GM12878 (cell line): ENCODE measurements at regions of chr14 and their contacts with region 1.

Region 1: GRCh38 chr14:95534299-95535225 is at the start of gene GLRX5:
- DNase-seq: peak; percentile 100
- ATAC-seq: peak; percentile 92
- H3K4me3 ChIP-seq: peak within 1 kb of the TSS; percentile 93
- H3K27ac ChIP-seq: peak within 1 kb of the TSS; percentile 87
- H3K4me1 ChIP-seq: peaks cover 8% of the 10 kb centered on the region; the same call in 1 of the 2 replicates
- H3K27me3 ChIP-seq: no peaks in the 10 kb centered on the region
- CTCF ChIP-seq: no peak
- EP300 ChIP-seq: no peak
- POLR2A ChIP-seq: peak; percentile 76
- RAD21 ChIP-seq: no peak
- polyA plus RNA-seq, gene GLRX5: 13.7 to 28.8 TPM

Region 2: GRCh38 chr14:95157327-95158189 is 377.0 kb before region 1 on chr14 and contains the start of gene DICER1:
- CTCF ChIA-PET with region 1: no interaction called
- POLR2A ChIA-PET with region 1: no interaction called
- RAD21 ChIA-PET with region 1: no interaction called
- SMC1A ChIA-PET with region 1: no interaction called
- in situ Hi-C with region 1: no loop called
- intact Hi-C with region 1: loop called (anchors 10 kb)
- DNase-seq: peak; percentile 44
- ATAC-seq: peak; percentile 85
- H3K4me3 ChIP-seq: peak within 1 kb of the TSS; percentile 89
- H3K27ac ChIP-seq: peak within 1 kb of the TSS; percentile 95
- H3K4me1 ChIP-seq: peaks cover 8% of the 10 kb centered on the region; the same call in 1 of the 2 replicates
- H3K27me3 ChIP-seq: no peaks in the 10 kb centered on the region
- CTCF ChIP-seq: no peak
- EP300 ChIP-seq: no peak
- POLR2A ChIP-seq: peak; percentile 60
- RAD21 ChIP-seq: no peak
- polyA plus RNA-seq, gene DICER1: 6.8 to 9.8 TPM

Region 3: GRCh38 chr14:95452176-95452892 is 82.2 kb before region 1 on chr14:
- CTCF ChIA-PET with region 1: interaction called, 525 read pairs
- POLR2A ChIA-PET with region 1: no interaction called
- RAD21 ChIA-PET with region 1: interaction called, 171 read pairs
- SMC1A ChIA-PET with region 1: interaction called, 187 read pairs
- in situ Hi-C with region 1: no loop called
- intact Hi-C with region 1: no loop called
- DNase-seq: no peak
- ATAC-seq: peak; percentile 88
- H3K4me3 ChIP-seq: no peak overlapping the region
- H3K27ac ChIP-seq: no peak overlapping the region
- H3K4me1 ChIP-seq: no peaks in the 10 kb centered on the region
- H3K27me3 ChIP-seq: no peaks in the 10 kb centered on the region
- CTCF ChIP-seq: peak; percentile 28 to 43 (median 41); a peak in 4 of 6 replicates
- EP300 ChIP-seq: no peak
- POLR2A ChIP-seq: no peak
- RAD21 ChIP-seq: peak; percentile 29; the same call in 1 of the 2 replicates

Region 4: DNA sequence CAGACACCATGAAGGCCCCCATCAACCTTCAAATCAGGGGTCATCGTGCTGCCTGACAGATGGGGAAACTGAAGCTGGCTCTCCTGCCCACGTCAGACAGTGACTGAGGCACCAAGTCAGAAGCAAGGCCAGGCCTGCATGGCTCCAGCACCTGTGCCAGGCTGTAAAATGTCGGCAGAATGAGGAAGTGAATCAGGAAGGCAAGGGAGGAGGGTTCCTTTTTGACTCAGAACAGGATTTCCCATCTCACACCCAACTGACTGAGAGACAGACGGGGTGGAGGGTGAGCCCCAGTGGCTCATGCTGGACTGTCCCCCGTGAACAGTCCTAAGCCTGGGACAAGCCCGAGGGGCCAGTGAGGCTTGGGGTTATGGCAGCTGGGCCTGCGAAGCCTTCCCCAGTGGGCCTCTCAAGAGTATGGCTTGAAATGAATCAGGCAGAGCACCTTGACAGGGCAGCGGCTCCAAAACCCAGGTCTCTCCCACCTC is 39.0 kb before region 1 on chr14:
- CTCF ChIA-PET with region 1: interaction called, 8 read pairs
- POLR2A ChIA-PET with region 1: interaction called, 3 read pairs
- RAD21 ChIA-PET with region 1: interaction called, 5 read pairs
- SMC1A ChIA-PET with region 1: interaction called, 4 read pairs
- in situ Hi-C with region 1: no loop called
- intact Hi-C with region 1: loop called (anchors 5 kb)
- DNase-seq: peak; percentile 94
- ATAC-seq: peak; percentile 90
- H3K4me3 ChIP-seq: peak overlapping the region; percentile 37; the same call in 1 of the 2 replicates
- H3K27ac ChIP-seq: peak overlapping the region; percentile 98
- H3K4me1 ChIP-seq: peaks cover 60% of the 10 kb centered on the region
- H3K27me3 ChIP-seq: no peaks in the 10 kb centered on the region
- CTCF ChIP-seq: no peak
- EP300 ChIP-seq: peak; percentile 66 to 95
- POLR2A ChIP-seq: peak; percentile 66
- RAD21 ChIP-seq: peak; percentile 17; the same call in 1 of the 2 replicates

Region 5: DNA sequence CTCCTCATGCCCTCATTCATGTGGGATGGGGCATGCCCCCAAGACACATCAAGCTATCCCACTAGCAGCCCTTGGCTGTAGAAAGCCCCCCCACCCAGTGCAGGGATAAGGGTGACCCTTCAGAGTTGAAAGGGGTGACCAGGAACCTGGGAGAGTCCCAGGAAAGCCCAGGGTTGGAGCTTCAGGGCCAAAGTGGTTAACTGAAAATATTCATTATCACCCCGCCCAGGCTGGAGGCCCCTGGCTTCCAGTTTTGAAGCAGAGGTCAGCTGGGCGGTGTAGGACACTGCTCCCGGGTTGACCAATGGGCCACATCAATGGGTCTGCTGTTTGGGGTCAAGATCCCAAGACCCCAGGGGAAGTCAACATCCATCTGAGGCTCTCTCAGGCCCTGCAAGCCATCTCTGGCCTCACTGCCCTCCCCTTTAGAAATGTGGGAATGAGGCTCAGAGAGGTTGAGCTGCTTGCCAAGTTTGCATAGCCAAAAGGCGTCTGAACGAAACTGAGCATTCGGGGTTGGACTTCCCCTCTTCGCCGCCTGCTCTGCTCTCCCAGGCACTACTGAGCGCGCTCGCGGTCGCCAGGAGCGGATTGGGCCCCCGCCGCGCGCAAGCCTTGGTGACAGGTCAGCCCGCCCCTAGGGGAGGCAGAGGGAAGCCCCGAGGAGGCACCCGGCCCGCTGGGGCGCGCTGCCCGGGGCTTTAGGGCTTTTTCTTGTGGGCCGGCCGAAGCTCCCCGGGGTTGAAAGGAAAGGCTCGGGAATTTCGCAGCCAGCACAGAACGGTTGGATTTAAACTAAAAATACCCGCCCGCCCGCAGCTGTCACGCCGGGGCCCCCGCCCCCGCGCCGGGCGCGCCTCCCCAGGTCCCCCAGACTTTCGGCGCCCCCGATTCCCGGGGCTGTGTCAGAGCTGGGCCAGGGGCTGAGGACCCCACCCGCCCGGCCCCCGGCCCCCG is 18.7 kb before region 1 on chr14:
- CTCF ChIA-PET with region 1: interaction called, 15 read pairs
- POLR2A ChIA-PET with region 1: interaction called, 8 read pairs
- RAD21 ChIA-PET with region 1: interaction called, 8 read pairs
- SMC1A ChIA-PET with region 1: interaction called, 19 read pairs
- in situ Hi-C with region 1: no loop called
- intact Hi-C with region 1: no loop called
- DNase-seq: no peak
- ATAC-seq: peak; percentile 87
- H3K4me3 ChIP-seq: peak overlapping the region; percentile 85
- H3K27ac ChIP-seq: peak overlapping the region; percentile 90
- H3K4me1 ChIP-seq: peaks cover 53% of the 10 kb centered on the region
- H3K27me3 ChIP-seq: no peaks in the 10 kb centered on the region
- CTCF ChIP-seq: peak; percentile 35 to 58 (median 46)
- EP300 ChIP-seq: 0 out of 4 replicates have a peak, but pooled peaks of 1 of the 2 experiments have one; percentile 6
- POLR2A ChIP-seq: 0 out of 2 replicates have a peak, but pooled peaks have one; percentile 59
- RAD21 ChIP-seq: peak; percentile 44

Region 6: GRCh38 chr14:95545179-95546168 is 10.9 kb after region 1 on chr14:
- CTCF ChIA-PET with region 1: interaction called, 5 read pairs
- POLR2A ChIA-PET with region 1: no interaction called
- RAD21 ChIA-PET with region 1: interaction called, 3 read pairs
- SMC1A ChIA-PET with region 1: interaction called, 12 read pairs
- in situ Hi-C with region 1: no loop called
- intact Hi-C with region 1: no loop called
- DNase-seq: no peak
- ATAC-seq: no peak
- H3K4me3 ChIP-seq: no peak overlapping the region
- H3K27ac ChIP-seq: no peak overlapping the region
- H3K4me1 ChIP-seq: no peaks in the 10 kb centered on the region
- H3K27me3 ChIP-seq: no peaks in the 10 kb centered on the region
- CTCF ChIP-seq: no peak
- EP300 ChIP-seq: no peak
- POLR2A ChIP-seq: no peak
- RAD21 ChIP-seq: no peak